A549 (cell line): ENCODE measurements at regions of chr3 and their contacts with region 1.

Region 1: DNA sequence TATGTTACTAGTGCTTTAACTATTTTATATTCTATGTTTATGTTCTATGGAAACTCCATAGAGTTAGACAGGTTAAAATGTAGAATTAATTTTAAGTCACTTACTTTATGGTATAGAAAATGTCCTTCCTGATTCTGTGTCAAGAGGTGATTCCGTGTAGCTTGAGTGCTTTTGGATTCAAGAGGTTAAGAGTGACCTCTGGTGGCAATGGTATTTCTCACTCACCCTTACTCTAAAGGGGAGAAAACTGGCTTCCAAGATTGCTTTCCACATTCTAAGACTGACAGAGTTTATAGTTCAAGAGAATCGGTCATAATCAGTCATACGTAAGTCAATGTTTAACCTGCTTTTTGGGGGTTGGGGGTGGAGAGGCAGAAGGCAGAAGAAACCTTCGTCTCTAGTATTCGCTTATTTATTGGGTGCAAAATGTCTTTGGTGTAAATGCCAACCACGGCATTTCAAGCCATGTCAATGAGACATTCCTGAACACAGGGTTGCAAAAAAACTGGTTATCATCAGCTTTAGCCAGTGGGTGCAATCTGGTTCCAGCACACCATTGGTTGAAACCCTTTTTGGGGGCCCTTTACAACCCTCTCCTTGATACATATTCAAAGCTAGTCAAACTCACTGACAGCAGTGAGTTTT is 92.0 kb upstream of the VGLL3 start:
- DNase-seq: peak; percentile 51 to 81
- ATAC-seq: peak; percentile 94 to 99
- H3K4me3 ChIP-seq: no peak overlapping the region
- H3K27ac ChIP-seq: 0 out of 6 replicates have a peak overlapping the region, but pooled peaks of 1 of the 2 experiments have one; percentile 5
- H3K4me1 ChIP-seq: no peaks in the 10 kb centered on the region; the same call in 2 of the 3 replicates
- CTCF ChIP-seq: peak; percentile 84
- EP300 ChIP-seq: no peak
- POLR2A ChIP-seq: no peak
- RAD21 ChIP-seq: peak; percentile 91 to 95

Region 2: GRCh38 chr3:86774082-86774691 is 308.7 kb before region 1 on chr3:
- CTCF ChIA-PET with region 1: interaction called, 54 read pairs
- POLR2A ChIA-PET with region 1: no interaction called
- DNase-seq: peak; percentile 3 to 49
- ATAC-seq: peak in 1 of 2 experiments; percentile 54; a peak in 1 of 6 replicates
- H3K4me3 ChIP-seq: no peak overlapping the region
- H3K27ac ChIP-seq: no peak overlapping the region
- H3K4me1 ChIP-seq: no peaks in the 10 kb centered on the region
- CTCF ChIP-seq: peak; percentile 66
- EP300 ChIP-seq: no peak
- POLR2A ChIP-seq: no peak
- RAD21 ChIP-seq: peak; percentile 74 to 87

Region 3: DNA sequence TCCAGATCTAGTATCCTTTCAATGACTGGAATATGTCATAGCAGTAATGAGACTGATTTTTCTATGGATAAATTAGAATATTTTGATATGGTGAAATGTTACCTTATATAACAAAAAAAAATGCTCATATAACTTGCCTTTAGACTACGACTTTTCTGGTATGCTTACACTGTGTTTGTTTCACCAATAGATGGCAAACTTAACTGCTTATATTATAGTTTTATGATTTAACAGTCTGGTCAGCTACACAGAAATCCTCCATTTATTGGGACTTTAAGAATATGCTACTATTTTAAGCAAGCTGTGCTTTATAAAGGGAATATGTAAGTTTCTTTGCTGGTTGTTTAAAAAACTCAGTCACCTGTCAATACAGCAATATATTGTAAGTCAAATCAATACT is 297.5 kb before region 1 on chr3:
- CTCF ChIA-PET with region 1: interaction called, 19 read pairs
- POLR2A ChIA-PET with region 1: no interaction called
- DNase-seq: peak in 1 of 2 experiments; percentile 27
- ATAC-seq: peak; percentile 71 to 77; a peak in 5 of 6 replicates
- H3K4me3 ChIP-seq: no peak overlapping the region
- H3K27ac ChIP-seq: no peak overlapping the region
- H3K4me1 ChIP-seq: no peaks in the 10 kb centered on the region; the same call in 1 of the 3 replicates
- CTCF ChIP-seq: peak; percentile 53
- EP300 ChIP-seq: no peak
- POLR2A ChIP-seq: no peak
- RAD21 ChIP-seq: peak; percentile 57 to 64

Region 4: DNA sequence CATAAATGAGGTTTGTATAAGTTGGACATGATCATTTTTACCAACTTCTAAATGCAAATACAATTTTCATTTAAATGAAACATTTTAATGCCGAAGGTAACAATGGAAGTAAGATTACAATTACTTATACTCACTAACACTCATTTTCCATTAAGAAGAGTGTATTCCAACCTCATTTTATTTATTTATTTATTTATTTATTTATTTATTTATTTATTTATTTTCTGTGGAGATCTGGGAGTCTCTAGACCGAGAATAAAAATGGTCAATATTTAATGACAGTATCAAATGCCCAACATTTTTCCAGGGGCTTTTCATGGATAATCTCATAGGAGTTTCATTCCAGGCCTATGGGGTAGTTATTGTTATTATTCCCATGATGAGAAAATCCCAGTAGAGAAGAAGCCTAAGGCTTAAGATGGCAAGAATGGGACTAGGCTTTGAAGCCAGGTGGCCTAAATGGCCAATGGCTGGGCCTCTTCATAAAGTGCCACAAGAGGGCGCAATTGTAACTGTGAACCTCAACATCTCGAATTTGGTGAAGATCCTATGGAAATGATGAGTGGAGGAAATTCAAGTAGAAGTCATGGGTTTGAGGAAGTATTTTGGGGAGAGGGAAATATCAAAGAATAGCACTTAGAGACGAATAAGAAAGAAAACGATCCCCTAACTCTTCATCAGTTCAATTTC is 113.3 kb before region 1 on chr3:
- CTCF ChIA-PET with region 1: interaction called, 10 read pairs
- POLR2A ChIA-PET with region 1: no interaction called
- DNase-seq: peak in 1 of 2 experiments; percentile 75
- ATAC-seq: peak; percentile 63 to 87; a peak in 5 of 6 replicates
- H3K4me3 ChIP-seq: no peak overlapping the region
- H3K27ac ChIP-seq: no peak overlapping the region
- H3K4me1 ChIP-seq: peaks cover 8% of the 10 kb centered on the region; the same call in 2 of the 3 replicates
- CTCF ChIP-seq: peak; percentile 67
- EP300 ChIP-seq: no peak
- POLR2A ChIP-seq: no peak
- RAD21 ChIP-seq: peak; percentile 72 to 83

Region 5: DNA sequence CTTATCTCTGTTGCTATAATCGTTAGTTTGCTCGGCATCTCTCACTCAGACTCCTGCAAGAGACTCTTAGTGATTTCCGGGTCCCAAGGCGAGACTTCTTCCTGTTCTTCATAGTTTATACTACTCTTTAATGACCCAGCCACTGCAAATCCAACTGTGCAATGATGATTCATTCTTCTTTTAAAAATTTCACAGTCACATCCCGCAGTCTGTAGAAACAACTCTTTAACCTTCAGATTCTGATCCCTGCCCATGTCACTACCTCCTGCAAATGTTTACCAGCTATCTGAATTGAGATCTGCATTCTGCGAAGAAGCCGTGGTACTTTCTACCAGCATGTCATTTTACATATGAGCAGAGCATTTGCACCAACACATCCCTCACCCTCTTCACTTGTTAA is 89.2 kb before region 1 on chr3:
- CTCF ChIA-PET with region 1: interaction called, 10 read pairs
- POLR2A ChIA-PET with region 1: no interaction called
- DNase-seq: peak in 1 of 2 experiments; percentile 83
- ATAC-seq: peak in 1 of 2 experiments; percentile 12; a peak in 2 of 6 replicates
- H3K4me3 ChIP-seq: peak overlapping the region; percentile 29
- H3K27ac ChIP-seq: peak overlapping the region; percentile 83 to 93
- H3K4me1 ChIP-seq: peaks cover 61% of the 10 kb centered on the region
- CTCF ChIP-seq: no peak
- EP300 ChIP-seq: peak; percentile 26 to 45; a peak in 2 of 5 replicates
- POLR2A ChIP-seq: no peak
- RAD21 ChIP-seq: no peak

Region 6: GRCh38 chr3:87006844-87007439 is 76.0 kb before region 1 on chr3:
- CTCF ChIA-PET with region 1: interaction called, 15 read pairs
- POLR2A ChIA-PET with region 1: no interaction called
- DNase-seq: peak in 1 of 2 experiments; percentile 52
- ATAC-seq: peak in 1 of 2 experiments; percentile 53; a peak in 1 of 6 replicates
- H3K4me3 ChIP-seq: no peak overlapping the region
- H3K27ac ChIP-seq: no peak overlapping the region
- H3K4me1 ChIP-seq: no peaks in the 10 kb centered on the region
- CTCF ChIP-seq: peak; percentile 60
- EP300 ChIP-seq: no peak
- POLR2A ChIP-seq: no peak
- RAD21 ChIP-seq: peak; percentile 65 to 67